ENCODE measurements at regions of chr11 and their contacts with region 1.

Region 1: DNA sequence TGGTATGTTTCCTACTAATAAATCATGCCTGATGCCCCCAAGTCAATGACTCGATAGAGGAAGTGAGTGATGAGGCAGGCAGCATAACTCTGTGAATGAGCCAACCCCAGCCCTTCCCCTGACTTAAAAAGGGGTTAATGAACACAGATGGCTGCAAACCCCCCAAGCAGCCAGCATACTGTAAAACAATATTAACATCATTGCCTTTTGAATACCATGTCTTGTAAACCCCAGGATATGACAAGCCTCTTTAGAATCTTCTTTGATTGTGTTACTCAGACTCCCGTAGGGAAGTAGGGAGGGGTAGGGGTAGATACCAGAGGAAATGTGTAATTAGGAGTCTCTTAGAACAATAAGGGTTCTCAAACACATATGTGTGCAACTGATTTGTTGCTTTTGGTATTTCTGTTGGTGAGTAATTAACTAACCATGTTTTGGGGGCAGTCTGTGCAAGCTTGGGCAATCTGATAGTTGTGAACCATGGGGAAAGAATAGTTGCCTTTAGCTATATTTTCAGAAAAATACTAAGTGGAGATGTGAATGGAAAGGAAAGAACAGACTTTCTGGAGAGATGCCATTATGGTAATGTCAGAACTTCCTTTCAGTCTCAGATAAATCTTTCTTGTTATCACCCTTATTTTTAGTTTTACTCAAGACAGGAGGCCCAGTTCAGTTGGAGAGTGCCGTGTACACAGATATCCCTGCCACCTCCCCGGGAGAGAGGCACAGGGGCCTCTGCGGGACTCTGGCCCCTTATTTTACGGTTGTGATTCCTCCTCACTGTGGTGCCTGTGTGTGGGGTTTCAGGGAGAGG is 701.8 kb downstream of the NTM start:
- DNase-seq: peak; percentile 97
- H3K4me3 ChIP-seq: no peak overlapping the region
- H3K27ac ChIP-seq: peak overlapping the region; percentile 99
- H3K4me1 ChIP-seq: peaks cover 56% of the 10 kb centered on the region
- H3K27me3 ChIP-seq: no peaks in the 10 kb centered on the region
- CTCF ChIP-seq: no peak

Region 2: DNA sequence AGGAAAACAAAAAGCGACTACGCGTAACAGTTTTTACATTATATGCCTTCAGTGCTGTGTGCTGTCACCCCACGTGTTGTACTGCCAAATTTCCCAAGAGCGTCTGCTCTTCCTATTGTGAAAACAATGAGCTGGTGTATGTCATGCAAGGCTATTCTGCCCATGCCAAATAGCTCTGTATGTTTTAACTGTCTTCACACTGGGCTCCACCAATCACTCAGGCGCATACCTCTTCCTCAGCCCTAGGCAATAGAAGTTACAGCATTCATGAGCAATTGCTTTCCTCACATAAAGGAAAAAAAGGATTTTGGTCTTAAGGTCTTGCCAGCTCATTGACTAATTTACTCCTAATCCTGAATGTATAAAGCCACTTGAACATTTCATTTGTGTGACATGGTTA is 95.0 kb before region 1 on chr11:
- CTCF ChIA-PET with region 1: no interaction called
- dilution Hi-C with region 1: loop called (anchors 5 kb)
- in situ Hi-C with region 1: no loop called
- intact Hi-C with region 1: loop called (anchors 2 kb)
- DNase-seq: peak; percentile 95
- H3K4me3 ChIP-seq: peak overlapping the region in 2 of 3 experiments; percentile 21 to 26
- H3K27ac ChIP-seq: peak overlapping the region; percentile 95
- H3K4me1 ChIP-seq: peaks cover 29% of the 10 kb centered on the region
- H3K27me3 ChIP-seq: no peaks in the 10 kb centered on the region
- CTCF ChIP-seq: no peak

Region 3: DNA sequence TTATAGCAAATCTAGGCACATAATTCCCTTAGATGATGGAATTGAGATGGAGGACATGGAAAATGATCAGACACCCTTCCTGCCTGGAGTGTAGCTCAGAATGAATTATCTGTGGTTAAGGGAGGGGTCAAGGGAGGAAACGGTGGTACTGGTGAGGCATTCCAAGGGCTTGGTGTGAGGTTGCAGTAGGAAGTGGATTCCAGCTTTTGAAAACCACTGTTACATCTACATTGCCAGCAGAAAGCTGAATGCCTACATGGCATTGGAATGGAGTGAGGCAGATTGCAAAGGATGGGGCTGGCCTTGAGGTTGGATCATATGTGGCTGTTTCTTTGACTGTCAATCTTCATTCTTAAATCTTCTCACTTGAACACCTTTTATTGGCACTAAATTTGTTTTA is 17.4 kb before region 1 on chr11:
- CTCF ChIA-PET with region 1: interaction called, 4 read pairs
- dilution Hi-C with region 1: no loop called
- in situ Hi-C with region 1: no loop called
- intact Hi-C with region 1: loop called (anchors 1 kb)
- DNase-seq: peak; percentile 81
- H3K4me3 ChIP-seq: no peak overlapping the region
- H3K27ac ChIP-seq: peak overlapping the region; percentile 69
- H3K4me1 ChIP-seq: peaks cover 56% of the 10 kb centered on the region
- H3K27me3 ChIP-seq: no peaks in the 10 kb centered on the region
- CTCF ChIP-seq: no peak

Region 4: GRCh38 chr11:132114185-132114584 is 41.9 kb after region 1 on chr11:
- CTCF ChIA-PET with region 1: no interaction called
- dilution Hi-C with region 1: no loop called
- in situ Hi-C with region 1: no loop called
- intact Hi-C with region 1: loop called (anchors 5 kb)
- DNase-seq: no peak
- H3K4me3 ChIP-seq: no peak overlapping the region
- H3K27ac ChIP-seq: no peak overlapping the region
- H3K4me1 ChIP-seq: peaks cover 14% of the 10 kb centered on the region
- H3K27me3 ChIP-seq: no peaks in the 10 kb centered on the region
- CTCF ChIP-seq: peak; percentile 34 to 68